Right ventricle myocardium superior (tissue), 1 donor: ENCODE measurements at regions of chr3 and their contacts with region 1.

Region 1: GRCh38 chr3:146814611-146815305 is 209.6 kb upstream of the PLSCR5 start:
- DNase-seq: no peak
- ATAC-seq: no peak

Region 2: GRCh38 chr3:147191795-147192385 is 377.1 kb after region 1 on chr3:
- intact Hi-C with region 1: loop called (anchors 5 kb)
- DNase-seq: no peak
- ATAC-seq: no peak